ENCODE measurements at regions of chr13 and their contacts with region 1.

Region 1: GRCh38 chr13:45302507-45302906 is 38.5 kb downstream of the TPT1 start:
- DNase-seq: no peak
- H3K4me3 ChIP-seq: no peak overlapping the region
- H3K27ac ChIP-seq: no peak overlapping the region
- H3K4me1 ChIP-seq: no peaks in the 10 kb centered on the region
- H3K27me3 ChIP-seq: no peaks in the 10 kb centered on the region
- CTCF ChIP-seq: no peak

Region 2: GRCh38 chr13:44629465-44630183 is 672.9 kb before region 1 on chr13:
- CTCF ChIA-PET with region 1: no interaction called
- POLR2A ChIA-PET with region 1: no interaction called
- intact Hi-C with region 1: no loop called
- DNase-seq: no peak
- H3K4me3 ChIP-seq: no peak overlapping the region
- H3K27ac ChIP-seq: no peak overlapping the region
- H3K4me1 ChIP-seq: 0 out of 2 replicates have a peak, but pooled peaks cover 4% of the 10 kb centered on the region
- H3K27me3 ChIP-seq: no peaks in the 10 kb centered on the region
- CTCF ChIP-seq: no peak

Region 3: GRCh38 chr13:45162821-45163220 is 139.7 kb before region 1 on chr13:
- CTCF ChIA-PET with region 1: no interaction called
- POLR2A ChIA-PET with region 1: no interaction called
- intact Hi-C with region 1: no loop called
- DNase-seq: peak in 1 of 2 experiments; percentile 95
- H3K4me3 ChIP-seq: peak overlapping the region; percentile 34; the same call in 1 of the 2 replicates
- H3K27ac ChIP-seq: peak overlapping the region; percentile 83
- H3K4me1 ChIP-seq: peaks cover 48% of the 10 kb centered on the region
- H3K27me3 ChIP-seq: no peaks in the 10 kb centered on the region
- CTCF ChIP-seq: no peak

Region 4: DNA sequence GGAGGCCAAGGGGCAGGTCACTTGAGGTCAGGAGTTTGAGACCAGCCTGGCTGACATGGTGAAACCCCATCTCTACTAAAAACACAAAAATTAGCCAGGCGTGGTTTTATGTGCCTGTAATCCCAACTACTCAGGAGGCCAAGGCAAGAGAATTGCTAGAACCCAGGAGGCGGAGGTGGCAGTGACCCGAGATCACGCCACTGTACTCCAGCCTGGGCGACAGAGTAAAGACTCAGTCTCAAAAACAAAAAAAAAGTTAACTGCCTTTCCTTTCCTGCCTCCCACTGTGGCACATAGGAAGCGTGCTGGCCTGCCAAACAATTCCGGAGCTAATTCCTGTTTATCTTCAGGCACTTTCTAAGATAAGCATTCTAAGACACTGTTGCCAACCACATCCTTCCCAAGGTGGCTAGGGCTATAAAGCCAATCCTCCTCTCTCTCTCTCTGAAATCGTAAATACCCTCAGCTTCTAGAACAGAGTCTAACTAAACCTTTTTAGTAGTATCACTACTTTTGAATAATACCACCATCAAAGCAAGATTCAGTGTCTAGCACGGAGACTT is 94.1 kb after region 1 on chr13:
- CTCF ChIA-PET with region 1: no interaction called
- POLR2A ChIA-PET with region 1: no interaction called
- intact Hi-C with region 1: no loop called
- DNase-seq: no peak
- H3K4me3 ChIP-seq: no peak overlapping the region
- H3K27ac ChIP-seq: no peak overlapping the region
- H3K4me1 ChIP-seq: no peaks in the 10 kb centered on the region
- H3K27me3 ChIP-seq: no peaks in the 10 kb centered on the region
- CTCF ChIP-seq: no peak

Region 5: DNA sequence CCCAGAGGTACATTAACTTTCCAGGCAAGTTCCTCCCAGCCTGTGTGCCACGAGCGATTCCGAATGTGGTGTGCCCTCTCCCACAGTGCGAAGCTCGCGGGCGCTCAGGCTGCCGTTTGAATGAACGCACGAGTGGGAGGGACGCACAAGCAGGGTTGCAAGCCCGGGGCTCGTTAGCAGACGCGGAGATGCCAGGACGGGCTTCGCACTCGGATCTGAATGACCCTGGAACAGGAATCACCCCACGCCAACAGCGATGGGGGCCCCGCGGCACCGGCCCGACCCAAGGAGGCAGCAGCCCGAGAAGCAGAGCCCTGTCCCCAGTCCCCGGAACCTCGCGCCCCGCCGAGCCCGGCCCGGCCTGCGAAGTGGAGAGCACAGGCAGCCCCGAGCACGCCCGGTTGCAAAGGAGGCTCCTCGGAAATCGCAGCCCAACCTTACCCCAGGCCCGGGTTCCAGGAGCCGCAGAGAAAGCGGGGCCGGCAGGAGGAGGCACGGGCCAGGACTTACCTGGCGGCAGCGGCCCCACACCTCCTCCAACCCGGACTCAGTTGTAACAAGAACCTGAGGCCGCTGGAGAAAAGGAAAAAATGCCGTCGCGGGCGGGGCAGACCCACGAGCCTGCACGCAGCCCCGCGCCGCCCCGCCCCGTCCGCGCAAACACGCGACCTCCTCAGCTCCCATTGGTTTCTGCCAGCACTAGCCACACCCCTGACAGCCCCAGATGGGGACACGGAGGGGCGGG is 115.5 kb after region 1 on chr13 and contains the start of gene SLC25A30:
- CTCF ChIA-PET with region 1: no interaction called
- POLR2A ChIA-PET with region 1: no interaction called
- intact Hi-C with region 1: no loop called
- DNase-seq: peak; percentile 82 to 96
- H3K4me3 ChIP-seq: peak within 1 kb of the TSS; percentile 63
- H3K27ac ChIP-seq: peak within 1 kb of the TSS; percentile 59
- H3K4me1 ChIP-seq: peaks cover 11% of the 10 kb centered on the region
- H3K27me3 ChIP-seq: no peaks in the 10 kb centered on the region
- CTCF ChIP-seq: no peak
- total RNA-seq, gene SLC25A30: 11.2 and 12.5 TPM in 2 replicates

Region 6: GRCh38 chr13:46211116-46211482 is 908.6 kb after region 1 on chr13:
- CTCF ChIA-PET with region 1: interaction called, 14 read pairs
- POLR2A ChIA-PET with region 1: no interaction called
- intact Hi-C with region 1: no loop called
- DNase-seq: no peak
- H3K4me3 ChIP-seq: peak overlapping the region; percentile 54
- H3K27ac ChIP-seq: no peak overlapping the region
- H3K4me1 ChIP-seq: peaks cover 22% of the 10 kb centered on the region; the same call in 1 of the 2 replicates
- H3K27me3 ChIP-seq: no peaks in the 10 kb centered on the region
- CTCF ChIP-seq: no peak

Measured in PC-9 (cell line).